ENCODE measurements at regions of chr10 and their contacts with region 1.

Region 1: DNA sequence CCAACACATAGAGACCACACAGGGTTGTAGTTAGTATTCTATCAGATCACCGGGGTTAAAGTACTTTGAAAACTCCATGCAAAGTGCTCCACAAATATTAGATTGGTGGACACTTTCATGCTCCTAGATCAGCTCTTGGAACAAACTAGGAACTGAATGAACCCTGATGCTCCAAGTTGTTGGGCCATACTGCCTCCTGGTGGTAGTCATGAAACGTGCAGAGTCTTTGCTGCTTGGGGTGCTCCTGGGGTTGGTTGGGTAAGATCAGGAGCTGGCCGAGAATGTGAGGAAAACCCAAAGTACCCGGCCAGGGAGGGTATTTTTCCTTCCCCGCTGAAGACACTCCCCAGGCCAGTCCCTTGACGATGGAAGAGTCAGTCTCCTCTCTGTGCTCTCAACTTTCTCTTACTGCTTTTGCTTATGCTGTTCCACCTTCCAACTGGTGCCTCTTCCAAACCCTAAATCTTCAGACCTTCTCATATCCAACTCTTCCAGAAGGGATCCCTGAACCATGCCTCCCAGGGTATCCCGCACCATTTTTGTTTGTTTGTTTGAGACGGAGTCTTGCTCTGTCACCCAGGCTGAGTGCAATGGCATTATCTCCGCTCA is 920 bp upstream of the RPEL1 start:
- DNase-seq: peak; percentile 88
- H3K4me3 Mint-ChIP-seq: no peak overlapping the region
- H3K27ac Mint-ChIP-seq: no peak overlapping the region
- H3K4me1 Mint-ChIP-seq: peaks cover 22% of the 10 kb centered on the region
- H3K27me3 Mint-ChIP-seq: no peaks in the 10 kb centered on the region
- CTCF ChIP-seq: peak; percentile 72

Region 2: GRCh38 chr10:102729029-102730026 is 515.4 kb before region 1 on chr10:
- CTCF ChIA-PET with region 1: no interaction called
- POLR2A ChIA-PET with region 1: no interaction called
- intact Hi-C with region 1: loop called (anchors 5 kb)
- DNase-seq: peak; percentile 75
- H3K4me3 Mint-ChIP-seq: no peak overlapping the region
- H3K27ac Mint-ChIP-seq: no peak overlapping the region
- H3K4me1 Mint-ChIP-seq: peaks cover 6% of the 10 kb centered on the region
- H3K27me3 Mint-ChIP-seq: no peaks in the 10 kb centered on the region
- CTCF ChIP-seq: peak; percentile 81

Region 3: GRCh38 chr10:103044942-103045489 is 199.8 kb before region 1 on chr10:
- CTCF ChIA-PET with region 1: no interaction called
- POLR2A ChIA-PET with region 1: no interaction called
- intact Hi-C with region 1: no loop called
- DNase-seq: no peak
- H3K4me3 Mint-ChIP-seq: no peak overlapping the region
- H3K27ac Mint-ChIP-seq: no peak overlapping the region
- H3K4me1 Mint-ChIP-seq: peaks cover 16% of the 10 kb centered on the region
- H3K27me3 Mint-ChIP-seq: no peaks in the 10 kb centered on the region
- CTCF ChIP-seq: no peak

Region 4: DNA sequence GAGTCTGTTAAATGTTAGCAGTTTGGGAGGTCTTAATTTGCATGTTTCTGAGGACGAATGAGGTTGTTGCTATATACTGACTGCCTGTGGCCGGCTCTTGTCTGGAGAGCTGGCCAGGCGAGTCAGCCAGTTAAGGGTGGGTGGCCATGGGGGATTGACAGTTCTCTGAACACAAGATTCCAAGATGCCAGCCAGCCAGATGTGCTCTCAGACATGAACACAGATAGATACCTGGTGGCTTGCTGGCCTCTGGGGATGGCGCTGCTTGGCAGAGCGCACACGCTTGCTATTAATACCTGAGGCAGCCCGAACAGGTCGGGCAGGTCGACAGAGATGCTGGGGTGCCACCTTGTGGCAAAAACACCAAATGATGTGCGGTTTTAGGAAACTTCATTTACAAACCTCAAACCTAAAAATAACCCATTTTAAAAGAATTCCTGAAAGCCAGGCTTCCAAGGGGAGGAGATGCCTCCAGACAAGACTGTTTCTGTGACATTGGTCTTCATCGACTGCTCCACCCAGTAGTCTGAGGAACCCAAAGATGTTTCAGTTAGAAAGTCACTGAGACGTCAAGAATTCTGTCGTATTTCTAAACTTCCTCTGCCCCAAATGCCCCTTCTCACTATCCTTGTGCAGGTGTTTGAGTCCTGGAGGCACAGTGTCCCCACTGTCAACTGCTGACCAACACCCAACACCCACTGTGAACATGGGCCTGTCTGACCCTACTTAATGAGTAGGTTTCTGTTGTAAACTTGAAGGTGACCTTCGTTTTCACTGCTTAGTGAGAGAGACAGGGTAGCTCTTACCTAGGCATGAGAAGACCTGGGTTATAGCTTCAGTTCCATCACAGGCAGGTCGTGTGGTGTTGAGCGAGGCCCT is 175.1 kb before region 1 on chr10:
- CTCF ChIA-PET with region 1: interaction called, 4 read pairs
- POLR2A ChIA-PET with region 1: no interaction called
- intact Hi-C with region 1: loop called (anchors 1 kb)
- DNase-seq: peak; percentile 59
- H3K4me3 Mint-ChIP-seq: no peak overlapping the region
- H3K27ac Mint-ChIP-seq: no peak overlapping the region
- H3K4me1 Mint-ChIP-seq: no peaks in the 10 kb centered on the region
- H3K27me3 Mint-ChIP-seq: no peaks in the 10 kb centered on the region
- CTCF ChIP-seq: peak; percentile 72

Region 5: GRCh38 chr10:103102195-103102594 is 142.6 kb before region 1 on chr10:
- CTCF ChIA-PET with region 1: interaction called, 18 read pairs
- POLR2A ChIA-PET with region 1: no interaction called
- intact Hi-C with region 1: no loop called
- DNase-seq: no peak
- H3K4me3 Mint-ChIP-seq: no peak overlapping the region
- H3K27ac Mint-ChIP-seq: no peak overlapping the region
- H3K4me1 Mint-ChIP-seq: no peaks in the 10 kb centered on the region
- H3K27me3 Mint-ChIP-seq: no peaks in the 10 kb centered on the region
- CTCF ChIP-seq: no peak

Region 6: DNA sequence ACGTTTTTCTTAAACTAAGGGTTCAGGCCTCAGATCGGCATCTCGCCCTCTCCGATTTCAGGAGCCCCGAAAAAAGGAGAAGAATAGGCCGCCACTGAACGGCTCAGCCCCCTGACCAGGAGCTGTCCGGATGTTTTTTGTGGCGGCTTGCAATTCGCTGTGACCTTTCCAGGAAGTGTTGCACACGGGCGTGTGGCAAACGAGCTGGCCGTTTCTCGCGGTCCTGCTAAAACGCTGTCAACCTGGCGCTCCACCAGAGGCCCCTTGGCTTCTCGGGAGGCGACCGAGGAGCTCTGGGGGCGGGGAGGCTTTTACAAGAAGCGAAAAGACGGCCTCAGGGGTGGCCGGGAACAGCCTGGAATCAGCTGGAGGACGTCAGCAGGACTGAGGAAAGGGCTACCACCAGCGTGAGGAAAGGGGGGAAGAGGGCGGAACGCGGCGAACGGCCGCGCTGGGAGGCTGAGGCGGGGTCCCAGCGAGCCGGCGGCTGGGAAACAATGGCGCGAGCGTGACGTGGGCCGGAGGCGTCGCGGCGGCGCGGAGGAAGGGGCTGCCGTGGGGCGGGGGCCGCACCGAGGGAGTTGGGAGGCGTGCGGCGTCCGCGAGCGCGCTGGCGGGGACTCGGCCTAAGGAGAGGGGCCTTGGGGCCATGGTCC is 52.2 kb before region 1 on chr10:
- CTCF ChIA-PET with region 1: interaction called, 4 read pairs
- POLR2A ChIA-PET with region 1: interaction called, 35 read pairs
- intact Hi-C with region 1: loop called (anchors 5 kb)
- DNase-seq: peak; percentile 76
- H3K4me3 Mint-ChIP-seq: peak overlapping the region; percentile 98
- H3K27ac Mint-ChIP-seq: peak overlapping the region; percentile 94
- H3K4me1 Mint-ChIP-seq: peaks cover 38% of the 10 kb centered on the region
- H3K27me3 Mint-ChIP-seq: no peaks in the 10 kb centered on the region
- CTCF ChIP-seq: no peak

Region 7: GRCh38 chr10:103333925-103334520 is 89.3 kb after region 1 on chr10:
- CTCF ChIA-PET with region 1: interaction called, 8 read pairs
- POLR2A ChIA-PET with region 1: no interaction called
- intact Hi-C with region 1: loop called (anchors 1 kb)
- DNase-seq: peak; percentile 36
- H3K4me3 Mint-ChIP-seq: no peak overlapping the region
- H3K27ac Mint-ChIP-seq: no peak overlapping the region
- H3K4me1 Mint-ChIP-seq: no peaks in the 10 kb centered on the region
- H3K27me3 Mint-ChIP-seq: no peaks in the 10 kb centered on the region
- CTCF ChIP-seq: peak; percentile 44

Region 8: GRCh38 chr10:103382769-103383168 is 138.0 kb after region 1 on chr10:
- CTCF ChIA-PET with region 1: no interaction called
- POLR2A ChIA-PET with region 1: no interaction called
- intact Hi-C with region 1: no loop called
- DNase-seq: no peak
- H3K4me3 Mint-ChIP-seq: no peak overlapping the region
- H3K27ac Mint-ChIP-seq: no peak overlapping the region
- H3K4me1 Mint-ChIP-seq: no peaks in the 10 kb centered on the region
- H3K27me3 Mint-ChIP-seq: no peaks in the 10 kb centered on the region
- CTCF ChIP-seq: no peak

Measured in MCF 10A (cell line).